A549 (cell line): ENCODE measurements at regions of chr3 and their contacts with region 1.

Region 1: GRCh38 chr3:101195951-101196713 is 124.2 kb downstream of the IMPG2 start:
- DNase-seq: peak; percentile 28 to 66
- ATAC-seq: peak; percentile 74 to 84
- H3K4me3 ChIP-seq: no peak overlapping the region
- H3K27ac ChIP-seq: peak overlapping the region; percentile 42 to 79; a peak in 5 of 6 replicates
- H3K4me1 ChIP-seq: 0 out of 3 replicates have a peak, but pooled peaks cover 6% of the 10 kb centered on the region
- CTCF ChIP-seq: peak; percentile 81
- EP300 ChIP-seq: no peak
- POLR2A ChIP-seq: no peak
- RAD21 ChIP-seq: peak; percentile 92 to 94

Region 2: DNA sequence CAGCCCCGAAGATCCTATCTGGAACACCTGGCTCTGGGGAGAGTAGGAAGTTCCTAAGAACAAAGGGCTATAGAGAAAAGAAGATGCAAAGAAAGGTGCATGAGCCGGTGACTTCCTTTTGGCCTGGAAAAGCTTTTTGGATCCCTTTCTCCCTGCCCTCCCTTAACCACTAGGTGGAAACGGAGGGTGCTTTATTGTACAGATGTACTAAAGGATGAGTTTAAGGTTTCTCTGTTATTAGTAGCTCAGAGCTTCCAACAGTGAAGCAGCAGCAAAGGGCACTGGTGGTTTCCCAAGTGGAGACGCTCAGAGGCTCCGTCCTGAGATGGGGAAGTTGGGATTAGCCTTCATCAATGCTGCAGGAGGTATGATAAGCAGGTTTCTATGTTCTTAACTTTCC is 592.7 kb before region 1 on chr3:
- CTCF ChIA-PET with region 1: interaction called, 18 read pairs
- POLR2A ChIA-PET with region 1: no interaction called
- DNase-seq: peak; percentile 27 to 59
- ATAC-seq: peak; percentile 94 to 96
- H3K4me3 ChIP-seq: no peak overlapping the region
- H3K27ac ChIP-seq: peak overlapping the region; percentile 33 to 58; a peak in 4 of 6 replicates
- H3K4me1 ChIP-seq: peaks cover 19% of the 10 kb centered on the region
- CTCF ChIP-seq: peak; percentile 41; the same call in 2 of the 3 replicates
- EP300 ChIP-seq: no peak
- POLR2A ChIP-seq: no peak
- RAD21 ChIP-seq: peak; percentile 60 to 62

Region 3: GRCh38 chr3:100737334-100737733 is 458.8 kb before region 1 on chr3:
- CTCF ChIA-PET with region 1: interaction called, 40 read pairs
- POLR2A ChIA-PET with region 1: no interaction called
- DNase-seq: peak; percentile 9 to 17
- ATAC-seq: peak; percentile 72 to 76; a peak in 5 of 6 replicates
- H3K4me3 ChIP-seq: no peak overlapping the region
- H3K27ac ChIP-seq: no peak overlapping the region
- H3K4me1 ChIP-seq: peaks cover 6% of the 10 kb centered on the region; the same call in 1 of the 3 replicates
- CTCF ChIP-seq: peak; percentile 57
- EP300 ChIP-seq: no peak
- POLR2A ChIP-seq: no peak
- RAD21 ChIP-seq: peak; percentile 52 to 59; a peak in 4 of 5 replicates

Region 4: GRCh38 chr3:100761211-100761942 is 434.8 kb before region 1 on chr3:
- CTCF ChIA-PET with region 1: interaction called, 20 read pairs
- POLR2A ChIA-PET with region 1: no interaction called
- DNase-seq: peak in 1 of 2 experiments; percentile 21
- ATAC-seq: peak; percentile 87 to 89
- H3K4me3 ChIP-seq: no peak overlapping the region
- H3K27ac ChIP-seq: no peak overlapping the region
- H3K4me1 ChIP-seq: no peaks in the 10 kb centered on the region
- CTCF ChIP-seq: no peak
- EP300 ChIP-seq: no peak
- POLR2A ChIP-seq: no peak
- RAD21 ChIP-seq: peak in 1 of 2 experiments; percentile 26; a peak in 1 of 5 replicates

Region 5: DNA sequence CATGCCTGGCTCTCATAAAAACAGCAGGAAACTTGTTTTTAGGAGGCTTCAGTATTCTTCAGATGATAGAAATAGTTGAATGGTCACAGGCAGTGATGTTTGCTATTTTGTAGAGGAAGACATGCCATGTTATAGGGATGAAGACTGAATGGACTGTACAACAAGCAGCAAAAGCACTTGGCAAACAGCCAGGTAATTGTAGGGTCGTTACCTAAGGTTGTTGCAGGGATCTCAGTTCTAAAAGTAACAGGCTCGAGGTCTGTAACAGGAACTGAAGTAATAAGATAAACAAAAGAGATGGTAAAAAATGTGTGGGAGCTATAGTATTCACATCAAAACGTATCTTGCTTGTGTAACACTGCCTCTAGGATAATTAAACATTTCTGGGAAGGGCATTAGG is 370.6 kb before region 1 on chr3:
- CTCF ChIA-PET with region 1: interaction called, 10 read pairs
- POLR2A ChIA-PET with region 1: no interaction called
- DNase-seq: no peak
- ATAC-seq: no peak
- H3K4me3 ChIP-seq: no peak overlapping the region
- H3K27ac ChIP-seq: no peak overlapping the region
- H3K4me1 ChIP-seq: no peaks in the 10 kb centered on the region
- CTCF ChIP-seq: no peak
- EP300 ChIP-seq: no peak
- POLR2A ChIP-seq: no peak
- RAD21 ChIP-seq: no peak

Region 6: GRCh38 chr3:100893590-100893989 is 302.5 kb before region 1 on chr3:
- CTCF ChIA-PET with region 1: interaction called, 12 read pairs
- POLR2A ChIA-PET with region 1: no interaction called
- DNase-seq: peak in 1 of 2 experiments; percentile 31
- ATAC-seq: peak in 1 of 2 experiments; percentile 66; a peak in 3 of 6 replicates
- H3K4me3 ChIP-seq: no peak overlapping the region
- H3K27ac ChIP-seq: no peak overlapping the region
- H3K4me1 ChIP-seq: no peaks in the 10 kb centered on the region
- CTCF ChIP-seq: peak; percentile 33; the same call in 2 of the 3 replicates
- EP300 ChIP-seq: no peak
- POLR2A ChIP-seq: no peak
- RAD21 ChIP-seq: peak; percentile 65 to 78

Region 7: GRCh38 chr3:101146946-101147345 is 49.2 kb before region 1 on chr3:
- CTCF ChIA-PET with region 1: no interaction called
- POLR2A ChIA-PET with region 1: no interaction called
- DNase-seq: no peak
- ATAC-seq: no peak
- H3K4me3 ChIP-seq: no peak overlapping the region
- H3K27ac ChIP-seq: no peak overlapping the region
- H3K4me1 ChIP-seq: no peaks in the 10 kb centered on the region
- CTCF ChIP-seq: no peak
- EP300 ChIP-seq: no peak
- POLR2A ChIP-seq: no peak
- RAD21 ChIP-seq: no peak